K562 (cell line): ENCODE measurements at regions of chr22 and their contacts with region 1.

Region 1: GRCh38 chr22:20591660-20592310 is 84.4 kb downstream of the MED15 start:
- DNase-seq: peak; percentile 74 to 96 (median 90)
- ATAC-seq: peak; percentile 42
- H3K4me3 ChIP-seq: no peak overlapping the region
- H3K27ac ChIP-seq: no peak overlapping the region
- H3K4me1 ChIP-seq: peaks cover 0 to 26% of the 10 kb centered on the region in 2 experiments; a peak in 2 of 5 replicates
- H3K27me3 ChIP-seq: peaks cover 35 to 65% of the 10 kb centered on the region in 2 experiments
- CTCF ChIP-seq: peak; percentile 3 to 31 (median 16); a peak in 1 of 6 replicates
- EP300 ChIP-seq: no peak
- POLR2A ChIP-seq: no peak
- RAD21 ChIP-seq: no peak

Region 2: GRCh38 chr22:20298803-20299735 is 292.7 kb before region 1 on chr22:
- CTCF ChIA-PET with region 1: no interaction called
- POLR2A ChIA-PET with region 1: no interaction called
- in situ Hi-C with region 1: no loop called
- intact Hi-C with region 1: no loop called
- DNase-seq: peak; percentile 99 to 100 (median 100)
- ATAC-seq: peak; percentile 97
- H3K4me3 ChIP-seq: peak overlapping the region; percentile 55
- H3K27ac ChIP-seq: no peak overlapping the region
- H3K4me1 ChIP-seq: peaks cover 8 to 30% of the 10 kb centered on the region in 2 experiments
- H3K27me3 ChIP-seq: peaks cover 58 to 85% of the 10 kb centered on the region in 2 experiments
- CTCF ChIP-seq: peak in 1 of 3 experiments; percentile 9; a peak in 1 of 6 replicates
- EP300 ChIP-seq: no peak
- POLR2A ChIP-seq: no peak
- RAD21 ChIP-seq: no peak

Region 3: DNA sequence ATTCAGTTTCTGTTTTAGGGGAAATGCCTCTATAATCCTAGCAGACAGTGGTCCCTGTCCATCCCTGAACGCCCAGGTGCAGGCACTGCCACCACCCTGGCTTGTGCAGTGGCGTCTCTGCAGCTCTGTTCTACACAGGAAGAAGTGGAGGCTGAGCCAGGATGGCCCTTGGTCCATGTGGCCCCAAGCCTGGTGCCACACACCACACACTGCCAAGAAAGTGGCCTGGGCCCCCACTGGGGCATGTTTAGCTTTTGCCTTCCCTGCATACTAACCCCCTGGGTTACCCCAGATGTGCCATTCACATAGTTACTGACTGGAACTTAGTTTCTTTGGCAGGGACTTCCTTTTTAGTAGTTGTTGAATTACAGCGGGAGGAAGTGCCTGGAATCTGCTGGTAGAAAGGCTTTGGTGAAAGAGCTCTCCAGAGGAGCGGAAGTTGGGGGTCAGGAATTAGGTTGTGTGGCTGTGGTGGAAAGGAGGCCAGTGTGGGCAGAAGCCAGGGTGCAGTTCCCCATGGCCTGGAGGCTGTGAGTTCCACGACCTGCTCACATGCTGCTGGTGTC is 15.5 kb before region 1 on chr22:
- CTCF ChIA-PET with region 1: no interaction called
- POLR2A ChIA-PET with region 1: interaction called, 32 read pairs
- in situ Hi-C with region 1: no loop called
- intact Hi-C with region 1: no loop called
- DNase-seq: no peak
- ATAC-seq: no peak
- H3K4me3 ChIP-seq: no peak overlapping the region
- H3K27ac ChIP-seq: no peak overlapping the region; the same call in 2 of the 3 replicates
- H3K4me1 ChIP-seq: peaks cover 10 to 36% of the 10 kb centered on the region in 2 experiments
- H3K27me3 ChIP-seq: no peaks in the 10 kb centered on the region
- CTCF ChIP-seq: no peak
- EP300 ChIP-seq: no peak
- POLR2A ChIP-seq: 0 out of 2 replicates have a peak, but pooled peaks have one; percentile 18
- RAD21 ChIP-seq: no peak

Region 4: GRCh38 chr22:20606041-20606783 is 14.4 kb after region 1 on chr22:
- CTCF ChIA-PET with region 1: no interaction called
- POLR2A ChIA-PET with region 1: interaction called, 96 read pairs
- in situ Hi-C with region 1: no loop called
- intact Hi-C with region 1: no loop called
- DNase-seq: peak; percentile 92 to 97 (median 95)
- ATAC-seq: peak; percentile 83
- H3K4me3 ChIP-seq: no peak overlapping the region
- H3K27ac ChIP-seq: no peak overlapping the region
- H3K4me1 ChIP-seq: peaks cover 0 to 45% of the 10 kb centered on the region in 2 experiments; a peak in 2 of 5 replicates
- H3K27me3 ChIP-seq: peaks cover 58 to 99% of the 10 kb centered on the region in 2 experiments; a peak in 4 of 5 replicates
- CTCF ChIP-seq: peak; percentile 98 to 100 (median 99)
- EP300 ChIP-seq: peak; percentile 51
- POLR2A ChIP-seq: no peak
- RAD21 ChIP-seq: peak; percentile 96 to 100; a peak in 3 of 4 replicates